H1 (cell line): ENCODE measurements at regions of chr11 and their contacts with region 1.

Region 1: DNA sequence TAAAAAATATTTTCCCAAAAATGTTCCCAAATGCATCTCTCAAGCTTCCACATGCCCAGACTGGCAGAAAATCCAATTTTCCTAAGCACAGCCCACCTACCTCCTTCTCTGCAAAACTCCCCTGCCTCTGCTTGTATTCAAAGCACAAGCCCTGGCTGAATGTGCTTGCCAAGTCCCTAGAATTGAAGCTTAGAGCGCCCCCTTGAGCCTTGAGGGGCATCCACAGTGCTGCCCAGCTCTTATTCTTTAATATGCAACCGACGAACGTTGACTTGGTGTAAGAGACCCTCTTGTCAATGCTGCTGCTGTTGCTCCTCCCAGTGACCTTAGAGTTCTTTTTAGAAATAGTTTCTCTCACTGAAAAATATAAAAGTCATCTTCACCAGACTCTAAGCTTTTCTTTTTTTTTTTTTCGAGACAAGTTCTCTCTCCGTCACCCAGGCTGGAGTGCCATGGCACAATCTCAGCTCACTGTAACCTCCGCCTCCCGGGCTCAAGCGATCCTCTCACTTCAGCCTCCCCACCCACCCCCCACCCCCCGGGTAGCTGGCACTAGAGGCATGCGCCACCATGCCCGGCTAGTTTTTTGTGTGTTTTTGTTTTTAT is 63.5 kb upstream of the CAPRIN1 start:
- DNase-seq: peak in 1 of 2 experiments; percentile 80
- H3K4me3 ChIP-seq: no peak overlapping the region
- H3K27ac ChIP-seq: no peak overlapping the region
- H3K4me1 ChIP-seq: no peaks in the 10 kb centered on the region
- H3K27me3 ChIP-seq: no peaks in the 10 kb centered on the region
- CTCF ChIP-seq: peak; percentile 79 to 94 (median 91)
- EP300 ChIP-seq: no peak
- POLR2A ChIP-seq: no peak
- RAD21 ChIP-seq: peak; percentile 82 to 91

Region 2: GRCh38 chr11:33761471-33761870 is 226.6 kb before region 1 on chr11:
- CTCF ChIA-PET with region 1: no interaction called
- POLR2A ChIA-PET with region 1: no interaction called
- DNase-seq: no peak
- H3K4me3 ChIP-seq: no peak overlapping the region
- H3K27ac ChIP-seq: no peak overlapping the region
- H3K4me1 ChIP-seq: no peaks in the 10 kb centered on the region
- H3K27me3 ChIP-seq: no peaks in the 10 kb centered on the region
- CTCF ChIP-seq: no peak
- EP300 ChIP-seq: no peak
- POLR2A ChIP-seq: no peak
- RAD21 ChIP-seq: no peak

Region 3: DNA sequence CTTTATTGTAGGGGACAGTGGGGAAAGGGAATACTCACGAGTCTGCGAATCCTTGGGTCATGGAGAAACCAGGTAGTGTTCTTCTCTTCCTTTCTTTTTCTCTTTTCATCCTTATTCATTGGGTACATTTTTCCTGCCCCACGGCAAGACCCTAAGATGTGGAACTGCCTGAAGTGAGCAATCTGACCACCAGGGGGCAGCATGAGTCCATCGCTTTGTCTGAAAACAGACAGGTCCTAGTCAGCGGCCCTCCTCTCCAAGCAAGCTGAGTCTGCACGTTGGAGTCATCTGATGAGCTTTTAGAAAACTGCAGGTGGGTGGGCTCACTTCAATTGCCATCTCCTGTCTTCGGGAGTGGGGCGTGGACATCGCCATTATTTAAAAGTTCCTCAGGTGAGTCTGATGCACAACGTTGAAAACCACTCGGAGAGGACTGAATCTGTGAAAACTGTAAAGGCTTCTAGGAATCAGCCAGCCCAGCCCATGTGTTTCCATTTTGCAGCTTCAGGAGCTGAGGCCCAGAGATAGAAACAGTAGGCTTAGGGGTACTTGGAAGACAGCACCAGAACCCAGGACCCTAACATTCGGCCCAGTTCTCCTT is 179.8 kb before region 1 on chr11:
- CTCF ChIA-PET with region 1: interaction called, 30 read pairs
- POLR2A ChIA-PET with region 1: no interaction called
- DNase-seq: peak; percentile 80 to 99
- H3K4me3 ChIP-seq: no peak overlapping the region
- H3K27ac ChIP-seq: no peak overlapping the region
- H3K4me1 ChIP-seq: no peaks in the 10 kb centered on the region
- H3K27me3 ChIP-seq: no peaks in the 10 kb centered on the region
- CTCF ChIP-seq: peak; percentile 84 to 89 (median 85)
- EP300 ChIP-seq: no peak
- POLR2A ChIP-seq: no peak
- RAD21 ChIP-seq: peak; percentile 91 to 92

Region 4: GRCh38 chr11:33857933-33858371 is 130.1 kb before region 1 on chr11:
- CTCF ChIA-PET with region 1: interaction called, 326 read pairs
- POLR2A ChIA-PET with region 1: interaction called, 3 read pairs
- DNase-seq: peak; percentile 59 to 92
- H3K4me3 ChIP-seq: no peak overlapping the region
- H3K27ac ChIP-seq: no peak overlapping the region
- H3K4me1 ChIP-seq: peaks cover 0 to 4% (median under 1%) of the 10 kb centered on the region in 4 experiments; a peak in 2 of 7 replicates
- H3K27me3 ChIP-seq: peaks cover 0 to 3% (median 0%) of the 10 kb centered on the region in 4 experiments; a peak in 1 of 7 replicates
- CTCF ChIP-seq: peak; percentile 91 to 96 (median 91)
- EP300 ChIP-seq: no peak
- POLR2A ChIP-seq: no peak
- RAD21 ChIP-seq: peak; percentile 98

Region 5: DNA sequence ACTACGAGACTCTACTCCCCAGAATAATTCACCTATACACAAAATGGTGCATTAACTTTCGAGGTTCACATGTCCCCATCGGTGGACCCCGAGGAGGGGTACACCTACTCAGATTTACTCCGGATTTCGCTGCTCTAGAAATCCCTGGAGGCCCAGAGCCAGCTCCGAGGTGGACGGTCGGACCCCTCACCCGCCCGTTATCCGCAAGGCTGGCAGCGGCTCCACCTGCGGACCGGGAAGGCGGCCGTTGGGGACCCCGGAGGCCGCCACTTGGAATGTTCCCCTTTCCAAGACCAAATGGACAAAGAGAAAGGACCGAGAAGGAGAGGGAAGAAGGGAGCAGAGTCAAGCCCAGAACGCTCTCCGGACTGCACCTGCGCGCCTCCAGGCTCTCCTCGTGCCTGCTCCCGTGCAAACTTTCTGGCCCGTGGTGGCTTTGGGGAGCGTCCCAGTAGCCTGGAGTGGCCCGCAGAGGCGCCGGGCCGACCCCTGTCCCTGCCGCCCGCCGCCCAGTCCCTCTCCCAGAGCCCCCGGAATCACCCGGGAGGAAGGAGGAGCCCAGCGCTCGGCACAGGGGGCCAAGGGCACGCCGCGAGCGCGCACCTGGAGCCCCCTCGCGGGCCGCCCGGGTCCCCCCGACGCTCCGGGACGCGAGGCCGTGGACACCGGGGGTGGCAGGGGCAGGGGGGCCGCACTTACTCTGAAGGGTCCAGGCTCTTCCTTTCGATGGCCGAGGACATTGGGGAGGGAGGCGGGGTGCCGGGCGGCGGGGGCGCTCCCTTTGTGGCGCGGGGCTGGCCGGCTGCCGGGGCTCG is 119.2 kb before region 1 on chr11:
- CTCF ChIA-PET with region 1: interaction called, 326 read pairs
- POLR2A ChIA-PET with region 1: interaction called, 3 read pairs
- DNase-seq: peak in 1 of 2 experiments; percentile 64
- H3K4me3 ChIP-seq: peak overlapping the region; percentile 58 to 77 (median 68)
- H3K27ac ChIP-seq: no peak overlapping the region
- H3K4me1 ChIP-seq: peaks cover 0 to 6% (median 5%) of the 10 kb centered on the region in 4 experiments; a peak in 5 of 7 replicates
- H3K27me3 ChIP-seq: peaks cover 17 to 46% (median 34%) of the 10 kb centered on the region in 4 experiments
- CTCF ChIP-seq: no peak
- EP300 ChIP-seq: no peak
- POLR2A ChIP-seq: no peak
- RAD21 ChIP-seq: no peak

Region 6: DNA sequence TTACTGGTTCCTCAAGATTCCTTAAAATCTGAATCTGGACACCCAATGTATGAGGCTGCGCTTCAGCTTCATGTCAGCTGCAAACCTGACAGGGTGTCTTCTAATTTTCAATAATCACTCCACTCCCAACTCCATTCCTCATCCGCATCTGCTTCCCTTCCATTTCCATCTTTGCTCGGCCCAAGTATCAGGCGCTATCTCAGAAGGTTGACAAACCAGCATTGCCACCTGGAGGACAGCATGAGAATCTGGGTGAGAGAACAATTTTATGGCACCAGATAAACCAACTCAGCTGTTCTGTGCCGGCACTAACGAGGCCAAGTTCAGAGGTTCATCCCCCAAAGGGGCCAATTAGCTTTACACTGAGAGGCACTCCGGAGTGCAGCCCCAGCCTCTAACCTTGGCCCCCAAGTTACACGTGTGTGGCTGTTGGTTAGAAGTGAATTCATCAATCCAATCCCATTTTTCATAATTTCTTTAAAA is 17.1 kb before region 1 on chr11:
- CTCF ChIA-PET with region 1: interaction called, 51 read pairs
- POLR2A ChIA-PET with region 1: no interaction called
- DNase-seq: peak in 1 of 2 experiments; percentile 53
- H3K4me3 ChIP-seq: no peak overlapping the region
- H3K27ac ChIP-seq: no peak overlapping the region
- H3K4me1 ChIP-seq: no peaks in the 10 kb centered on the region
- H3K27me3 ChIP-seq: no peaks in the 10 kb centered on the region
- CTCF ChIP-seq: peak; percentile 31 to 94 (median 80)
- EP300 ChIP-seq: no peak
- POLR2A ChIP-seq: no peak
- RAD21 ChIP-seq: peak; percentile 96 to 97